ENCODE measurements at regions of chr20 and their contacts with region 1.

Region 1: GRCh38 chr20:17445543-17445942 is 85.6 kb downstream of the BFSP1 start:
- DNase-seq: no peak
- ATAC-seq: no peak
- H3K4me3 ChIP-seq: no peak overlapping the region
- H3K27ac ChIP-seq: no peak overlapping the region
- H3K4me1 ChIP-seq: no peaks in the 10 kb centered on the region
- H3K27me3 ChIP-seq: peaks cover 83% of the 10 kb centered on the region
- CTCF ChIP-seq: no peak

Region 2: GRCh38 chr20:17495826-17496225 is 50.3 kb after region 1 on chr20:
- CTCF ChIA-PET with region 1: no interaction called
- POLR2A ChIA-PET with region 1: interaction called, 10 read pairs
- intact Hi-C with region 1: no loop called
- DNase-seq: no peak
- ATAC-seq: no peak
- H3K4me3 ChIP-seq: no peak overlapping the region
- H3K27ac ChIP-seq: no peak overlapping the region
- H3K4me1 ChIP-seq: no peaks in the 10 kb centered on the region
- H3K27me3 ChIP-seq: peaks cover 9% of the 10 kb centered on the region; the same call in 1 of the 2 replicates
- CTCF ChIP-seq: no peak

Region 3: GRCh38 chr20:18056174-18057100 is 610.9 kb after region 1 on chr20:
- CTCF ChIA-PET with region 1: no interaction called
- POLR2A ChIA-PET with region 1: interaction called, 11 read pairs
- intact Hi-C with region 1: no loop called
- DNase-seq: peak; percentile 60
- ATAC-seq: peak; percentile 41
- H3K4me3 ChIP-seq: peak overlapping the region; percentile 90
- H3K27ac ChIP-seq: peak overlapping the region; percentile 4; the same call in 1 of the 2 replicates
- H3K4me1 ChIP-seq: peaks cover 29% of the 10 kb centered on the region
- H3K27me3 ChIP-seq: 0 out of 2 replicates have a peak, but pooled peaks cover 4% of the 10 kb centered on the region
- CTCF ChIP-seq: no peak

Measured in PC-3 (cell line).